Transverse colon (tissue), 4 donors: ENCODE measurements at regions of chr2 and their contacts with region 1.

Region 1: GRCh38 chr2:95500854-95501253 is 16.3 kb upstream of the TRIM43B start:
- DNase-seq: no peak
- H3K4me3 ChIP-seq: no peak overlapping the region
- H3K27ac ChIP-seq: no peak overlapping the region
- H3K4me1 ChIP-seq: no peaks in the 10 kb centered on the region
- H3K27me3 ChIP-seq: no peaks in the 10 kb centered on the region
- CTCF ChIP-seq: no peak
- EP300 ChIP-seq: no peak
- POLR2A ChIP-seq: no peak

Region 2: GRCh38 chr2:95115418-95115817 is 385.4 kb before region 1 on chr2:
- in situ Hi-C with region 1: no loop called
- intact Hi-C with region 1: no loop called
- DNase-seq: peak; percentile 77
- H3K4me3 ChIP-seq: no peak overlapping the region
- H3K27ac ChIP-seq: no peak overlapping the region
- H3K4me1 ChIP-seq: peaks cover 2 to 33% (median 8%) of the 10 kb centered on the region in 4 donors
- H3K27me3 ChIP-seq: no peaks in the 10 kb centered on the region
- CTCF ChIP-seq: peak; percentile 51 to 71 (median 62)
- EP300 ChIP-seq: no peak
- POLR2A ChIP-seq: no peak

Region 3: GRCh38 chr2:95402370-95403203 is 98.3 kb before region 1 on chr2 and contains the start of gene FAHD2A:
- in situ Hi-C with region 1: no loop called
- intact Hi-C with region 1: no loop called
- DNase-seq: peak; percentile 98
- H3K4me3 ChIP-seq: peak within 1 kb of the TSS; percentile 60 to 84 (median 75)
- H3K27ac ChIP-seq: peak within 1 kb of the TSS; percentile 78 to 91 (median 90)
- H3K4me1 ChIP-seq: peaks cover 7 to 20% (median 13%) of the 10 kb centered on the region in 4 donors
- H3K27me3 ChIP-seq: no peaks in the 10 kb centered on the region
- CTCF ChIP-seq: no peak
- EP300 ChIP-seq: no peak
- POLR2A ChIP-seq: peak; percentile 89
- total RNA-seq, gene FAHD2A: 29.9 to 134 (median 42.7) TPM

Region 4: DNA sequence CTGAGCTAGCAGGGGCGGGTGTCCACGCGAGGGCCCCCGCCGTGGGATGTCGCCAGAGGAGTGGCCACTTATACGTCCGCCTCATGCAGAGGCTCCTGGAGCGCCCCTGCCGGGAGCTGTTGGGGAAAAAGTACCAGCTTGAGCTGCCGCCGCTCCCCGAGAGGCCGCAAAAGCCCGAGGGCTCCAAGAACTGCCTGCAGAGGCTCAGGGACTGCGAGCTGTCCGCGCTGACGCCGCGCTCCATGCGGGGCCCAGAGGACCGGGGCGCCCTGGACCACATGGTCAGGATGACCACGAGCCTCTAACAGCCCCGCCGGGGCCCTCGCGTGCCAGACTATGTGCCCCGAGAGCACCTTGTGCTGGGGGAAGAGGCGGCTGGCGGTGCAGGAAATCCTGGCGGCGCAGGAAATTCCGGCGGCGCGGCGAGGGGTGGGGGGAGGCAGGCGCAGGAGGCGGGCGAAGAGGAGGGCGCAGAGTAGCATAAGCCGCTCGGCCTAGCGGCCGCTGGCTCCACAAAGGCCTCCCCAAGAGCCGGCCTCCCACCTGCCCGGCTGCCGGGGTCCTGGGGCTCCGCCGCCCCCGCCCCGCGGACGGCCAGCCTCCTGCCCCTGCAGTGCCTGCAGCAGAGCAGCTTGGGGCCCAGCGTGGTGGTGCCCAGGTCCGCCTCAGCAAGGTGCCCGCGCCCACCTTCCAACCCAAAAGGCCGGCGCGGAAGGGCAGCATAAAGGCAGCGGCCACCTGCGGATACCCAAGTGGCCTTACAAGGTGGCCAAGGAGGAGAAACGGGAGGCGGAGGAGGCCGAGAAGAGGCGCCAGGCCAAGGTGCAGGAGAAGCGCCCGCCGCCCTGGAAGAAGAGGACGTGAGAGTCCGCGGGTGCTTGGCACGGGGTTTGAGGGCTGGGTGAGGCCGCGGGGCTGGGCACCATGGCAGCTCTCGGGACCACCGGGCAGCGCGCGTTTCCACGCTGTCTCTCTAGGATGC is 25.8 kb after region 1 on chr2:
- in situ Hi-C with region 1: no loop called
- intact Hi-C with region 1: loop called (anchors 1 kb)
- DNase-seq: peak; percentile 74
- H3K4me3 ChIP-seq: peak overlapping the region; percentile 73 to 89 (median 80)
- H3K27ac ChIP-seq: peak overlapping the region; percentile 82 to 86 (median 85)
- H3K4me1 ChIP-seq: peaks cover 0 to 23% (median 16%) of the 10 kb centered on the region in 4 donors
- H3K27me3 ChIP-seq: no peaks in the 10 kb centered on the region
- CTCF ChIP-seq: peak in 3 of 5 experiments; percentile 12 to 20 (median 19)
- EP300 ChIP-seq: no peak
- POLR2A ChIP-seq: peak; percentile 63

Region 5: DNA sequence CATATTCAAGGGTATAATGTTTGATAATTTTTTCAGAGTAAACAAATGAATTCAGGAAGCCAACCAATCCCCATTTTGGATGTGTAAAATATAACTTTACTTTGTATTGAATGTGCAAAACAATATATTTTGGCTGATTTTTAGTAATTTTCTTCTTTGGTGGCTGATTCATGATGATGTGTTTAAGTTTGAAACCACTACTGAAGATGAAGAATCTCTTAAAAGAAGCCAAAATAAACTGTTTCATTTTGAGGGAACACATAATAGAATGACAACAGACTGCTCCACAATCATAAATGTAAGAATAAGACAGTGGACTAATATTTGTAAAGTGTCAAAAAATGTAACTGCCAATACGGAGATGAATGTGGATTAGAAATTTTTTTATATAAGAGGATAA is 38.4 kb after region 1 on chr2:
- in situ Hi-C with region 1: no loop called
- intact Hi-C with region 1: no loop called
- DNase-seq: no peak
- H3K4me3 ChIP-seq: no peak overlapping the region
- H3K27ac ChIP-seq: no peak overlapping the region
- H3K4me1 ChIP-seq: no peaks in the 10 kb centered on the region
- H3K27me3 ChIP-seq: no peaks in the 10 kb centered on the region
- CTCF ChIP-seq: no peak
- EP300 ChIP-seq: no peak
- POLR2A ChIP-seq: no peak